ENCODE measurements at regions of chr12 and their contacts with region 1.

Region 1: GRCh38 chr12:98799146-98799810 is 154.2 kb downstream of the APAF1 start:
- DNase-seq: peak in 1 of 2 experiments; percentile 17
- ATAC-seq: peak in 1 of 2 experiments; percentile 72; a peak in 3 of 6 replicates
- H3K4me3 ChIP-seq: no peak overlapping the region
- H3K27ac ChIP-seq: no peak overlapping the region
- H3K4me1 ChIP-seq: no peaks in the 10 kb centered on the region
- CTCF ChIP-seq: no peak; the same call in 2 of the 3 replicates
- EP300 ChIP-seq: no peak
- POLR2A ChIP-seq: no peak
- RAD21 ChIP-seq: peak in 1 of 2 experiments; percentile 47; a peak in 3 of 5 replicates

Region 2: GRCh38 chr12:98754095-98754494 is 45.2 kb before region 1 on chr12:
- CTCF ChIA-PET with region 1: no interaction called
- POLR2A ChIA-PET with region 1: no interaction called
- DNase-seq: peak; percentile 86 to 87
- ATAC-seq: peak; percentile 97 to 98
- H3K4me3 ChIP-seq: no peak overlapping the region
- H3K27ac ChIP-seq: peak overlapping the region; percentile 41 to 77
- H3K4me1 ChIP-seq: peaks cover 26% of the 10 kb centered on the region
- CTCF ChIP-seq: no peak
- EP300 ChIP-seq: no peak
- POLR2A ChIP-seq: no peak
- RAD21 ChIP-seq: no peak

Region 3: GRCh38 chr12:98814254-98814653 is 15.0 kb after region 1 on chr12:
- CTCF ChIA-PET with region 1: interaction called, 11 read pairs
- POLR2A ChIA-PET with region 1: no interaction called
- DNase-seq: no peak
- ATAC-seq: no peak
- H3K4me3 ChIP-seq: no peak overlapping the region
- H3K27ac ChIP-seq: no peak overlapping the region
- H3K4me1 ChIP-seq: no peaks in the 10 kb centered on the region
- CTCF ChIP-seq: no peak
- EP300 ChIP-seq: no peak
- POLR2A ChIP-seq: no peak
- RAD21 ChIP-seq: no peak

Region 4: GRCh38 chr12:99043319-99043914 is 244.1 kb after region 1 on chr12:
- CTCF ChIA-PET with region 1: no interaction called
- POLR2A ChIA-PET with region 1: no interaction called
- DNase-seq: peak; percentile 38 to 76
- ATAC-seq: peak; percentile 67 to 80; a peak in 3 of 6 replicates
- H3K4me3 ChIP-seq: no peak overlapping the region
- H3K27ac ChIP-seq: no peak overlapping the region
- H3K4me1 ChIP-seq: no peaks in the 10 kb centered on the region
- CTCF ChIP-seq: peak; percentile 92
- EP300 ChIP-seq: no peak
- POLR2A ChIP-seq: no peak
- RAD21 ChIP-seq: peak; percentile 86 to 94

Measured in A549 (cell line).